ENCODE measurements at regions of chr1 and their contacts with region 1.

Region 1: GRCh38 chr1:6801966-6802365 is 16.7 kb downstream of the CAMTA1 start:
- DNase-seq: no peak
- H3K4me3 ChIP-seq: no peak overlapping the region
- H3K27ac ChIP-seq: no peak overlapping the region
- H3K4me1 ChIP-seq: peaks cover 15% of the 10 kb centered on the region
- H3K27me3 ChIP-seq: no peaks in the 10 kb centered on the region
- CTCF ChIP-seq: no peak

Region 2: DNA sequence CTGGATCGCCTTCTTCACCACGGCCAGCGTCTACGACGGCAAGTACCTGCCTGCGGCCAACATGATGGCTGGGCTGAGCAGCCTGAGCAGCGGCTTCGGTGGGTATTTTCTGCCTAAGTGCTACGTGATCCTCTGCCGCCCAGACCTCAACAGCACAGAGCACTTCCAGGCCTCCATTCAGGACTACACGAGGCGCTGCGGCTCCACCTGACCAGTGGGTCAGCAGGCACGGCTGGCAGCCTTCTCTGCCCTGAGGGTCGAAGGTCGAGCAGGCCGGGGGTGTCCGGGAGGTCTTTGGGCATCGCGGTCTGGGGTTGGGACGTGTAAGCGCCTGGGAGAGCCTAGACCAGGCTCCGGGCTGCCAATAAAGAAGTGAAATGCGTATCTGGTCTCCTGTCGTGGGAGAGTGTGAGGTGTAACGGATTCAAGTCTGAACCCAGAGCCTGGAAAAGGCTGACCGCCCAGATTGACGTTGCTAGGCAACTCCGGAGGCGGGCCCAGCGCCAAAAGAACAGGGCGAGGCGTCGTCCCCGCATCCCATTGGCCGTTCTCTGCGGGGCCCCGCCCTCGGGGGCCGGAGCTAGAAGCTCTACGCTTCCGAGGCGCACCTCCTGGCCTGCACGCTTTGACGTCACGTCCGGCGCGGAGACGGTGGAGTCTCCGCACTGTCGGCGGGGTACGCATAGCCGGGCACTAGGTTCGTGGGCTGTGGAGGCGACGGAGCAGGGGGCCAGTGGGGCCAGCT is 222.4 kb before region 1 on chr1 and contains the start of gene ZBTB48:
- CTCF ChIA-PET with region 1: no interaction called
- POLR2A ChIA-PET with region 1: no interaction called
- intact Hi-C with region 1: no loop called
- DNase-seq: peak; percentile 86 to 98
- H3K4me3 ChIP-seq: peak within 1 kb of the TSS; percentile 78
- H3K27ac ChIP-seq: no peak within 1 kb of the TSS
- H3K4me1 ChIP-seq: peaks cover 8% of the 10 kb centered on the region
- H3K27me3 ChIP-seq: no peaks in the 10 kb centered on the region
- CTCF ChIP-seq: no peak
- total RNA-seq, gene ZBTB48: 17.2 and 25.5 TPM in 2 replicates

Region 3: DNA sequence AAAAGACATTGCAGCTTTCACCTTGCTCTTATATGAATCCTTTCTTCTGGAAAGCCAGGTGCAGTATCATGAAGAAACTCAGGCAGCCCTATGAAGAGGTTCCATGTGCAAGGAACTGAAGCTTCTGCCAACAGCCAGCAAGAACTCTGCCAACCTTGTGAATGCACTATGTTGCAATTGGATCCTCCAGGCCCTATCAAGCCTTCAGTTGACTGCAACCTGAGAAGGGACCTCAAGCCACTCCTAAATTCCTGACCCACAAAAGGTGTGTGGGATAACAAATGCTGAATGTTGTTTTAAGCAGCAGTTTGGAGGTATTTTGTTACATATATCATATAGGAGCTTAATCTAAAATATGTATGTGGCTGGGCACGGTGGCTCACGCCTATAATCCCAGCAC is 1931.5 kb after region 1 on chr1:
- CTCF ChIA-PET with region 1: no interaction called
- POLR2A ChIA-PET with region 1: interaction called, 15 read pairs
- intact Hi-C with region 1: no loop called
- DNase-seq: peak; percentile 68 to 88
- H3K4me3 ChIP-seq: no peak overlapping the region
- H3K27ac ChIP-seq: no peak overlapping the region
- H3K4me1 ChIP-seq: peaks cover 9% of the 10 kb centered on the region; the same call in 1 of the 2 replicates
- H3K27me3 ChIP-seq: no peaks in the 10 kb centered on the region
- CTCF ChIP-seq: no peak